ENCODE measurements at regions of chr13 and their contacts with region 1.

Region 1: GRCh38 chr13:21014502-21015170 is 46.8 kb downstream of the LATS2 start:
- H3K4me3 Mint-ChIP-seq: no peak overlapping the region
- H3K27ac Mint-ChIP-seq: no peak overlapping the region
- H3K4me1 Mint-ChIP-seq: peaks cover 61% of the 10 kb centered on the region
- H3K27me3 Mint-ChIP-seq: no peaks in the 10 kb centered on the region

Region 2: DNA sequence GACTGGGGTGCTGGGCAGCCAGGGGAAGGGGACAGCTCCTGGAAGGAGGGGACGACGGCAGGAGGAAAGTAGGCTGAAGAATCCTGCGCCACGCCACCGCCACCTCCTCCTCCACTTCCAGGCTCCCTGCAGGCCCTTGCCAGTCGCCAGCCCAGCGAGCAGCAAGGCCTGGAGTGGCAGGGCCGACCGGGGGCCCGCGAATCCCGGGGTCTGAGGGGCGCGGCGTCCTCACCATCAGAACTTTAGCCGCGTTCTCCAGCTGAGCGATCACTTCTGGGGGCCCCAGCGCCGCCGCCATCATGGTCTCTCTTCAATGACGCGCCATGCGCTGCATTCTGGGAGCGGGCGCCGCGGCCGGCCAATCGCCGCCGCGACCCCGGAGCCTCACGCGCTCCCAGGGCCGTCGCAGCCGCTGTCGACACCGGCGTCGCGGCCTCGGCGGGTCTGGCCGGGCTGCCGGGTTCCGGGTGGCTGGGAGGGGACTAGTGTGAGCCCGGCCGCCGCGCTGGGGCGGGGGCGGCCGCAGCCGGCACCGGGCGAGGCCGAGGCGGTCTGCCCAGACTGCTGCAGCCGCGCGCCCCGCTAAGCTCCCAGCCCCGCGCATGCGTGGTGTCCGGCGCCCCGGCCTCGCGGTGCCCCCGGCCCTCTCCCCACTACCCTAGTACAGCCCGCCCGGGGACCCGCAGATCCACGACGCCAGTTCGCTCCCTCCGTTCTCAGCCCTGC is 112.0 kb before region 1 on chr13 and contains the start of gene XPO4:
- intact Hi-C with region 1: no loop called
- H3K4me3 Mint-ChIP-seq: peak within 1 kb of the TSS; percentile 87
- H3K27ac Mint-ChIP-seq: peak within 1 kb of the TSS; percentile 90
- H3K4me1 Mint-ChIP-seq: peaks cover 9% of the 10 kb centered on the region
- H3K27me3 Mint-ChIP-seq: peaks cover 4% of the 10 kb centered on the region

Region 3: DNA sequence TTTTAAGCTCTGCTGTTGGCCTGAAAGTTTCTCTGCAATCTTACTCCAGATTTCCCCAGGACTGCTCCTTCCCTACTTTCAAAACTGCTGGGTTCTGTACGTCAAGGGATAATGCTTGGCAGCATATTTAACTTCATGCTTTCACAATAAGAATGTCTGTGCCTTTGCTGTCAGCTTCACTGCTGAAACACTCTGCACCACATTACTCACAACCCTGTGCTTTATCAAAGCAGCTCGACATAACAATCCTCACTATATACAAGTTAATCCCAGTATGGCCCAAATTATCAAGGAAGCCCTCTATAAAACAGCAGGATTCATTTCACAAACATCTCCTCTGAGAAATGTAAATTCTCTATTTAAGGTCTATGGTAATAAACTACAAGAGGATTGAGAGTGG is 29.3 kb after region 1 on chr13:
- intact Hi-C with region 1: no loop called
- H3K4me3 Mint-ChIP-seq: no peak overlapping the region
- H3K27ac Mint-ChIP-seq: no peak overlapping the region
- H3K4me1 Mint-ChIP-seq: peaks cover 79% of the 10 kb centered on the region
- H3K27me3 Mint-ChIP-seq: no peaks in the 10 kb centered on the region

Region 4: GRCh38 chr13:21060987-21061763 is 46.5 kb after region 1 on chr13 and contains the start of gene LATS2:
- intact Hi-C with region 1: loop called (anchors 5 kb)
- H3K4me3 Mint-ChIP-seq: peak within 1 kb of the TSS; percentile 79
- H3K27ac Mint-ChIP-seq: peak within 1 kb of the TSS; percentile 84
- H3K4me1 Mint-ChIP-seq: peaks cover 48% of the 10 kb centered on the region
- H3K27me3 Mint-ChIP-seq: no peaks in the 10 kb centered on the region

Measured in dendritic cell treated with granulocyte-macrophage colony-stimulating factor and Interleukin-4, amounts not matched to agents 40 ng/mL and 50 ng/mL, for 4 days (primary cell).